MCF 10A (cell line): ENCODE measurements at regions of chr3 and their contacts with region 1.

Region 1: DNA sequence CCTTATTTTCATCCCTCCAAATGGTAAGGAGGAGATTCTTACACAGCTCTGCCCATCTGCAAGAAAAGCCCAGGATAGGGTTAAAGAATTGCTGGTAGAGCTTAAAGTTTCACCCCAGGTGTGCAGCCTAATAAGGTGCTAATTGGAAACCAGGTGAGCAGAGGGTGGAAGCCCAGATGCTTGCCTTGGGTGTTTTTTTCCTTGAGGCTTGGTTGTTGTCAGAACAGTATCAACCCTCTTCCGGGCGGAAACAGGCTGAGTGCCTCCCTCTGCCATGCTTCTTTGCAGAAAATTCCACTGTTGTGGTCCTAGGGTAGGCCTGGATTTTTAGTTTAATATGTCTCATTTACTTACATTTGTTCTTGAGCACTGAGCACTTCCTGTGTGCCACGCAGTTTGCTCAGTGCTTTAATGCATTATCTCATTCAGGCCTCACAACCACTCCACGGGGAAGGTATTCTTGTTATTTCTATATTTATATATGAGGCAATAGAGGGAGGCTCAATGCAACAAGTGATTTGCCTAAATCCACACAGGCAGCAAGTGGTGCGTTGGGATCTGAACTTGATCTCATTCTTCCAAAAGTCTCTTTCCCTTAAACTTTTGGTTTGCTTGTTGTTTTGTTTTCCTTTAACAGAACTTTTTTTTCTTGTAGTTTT is 115.0 kb upstream of the LRIG1 start:
- DNase-seq: no peak
- H3K4me3 Mint-ChIP-seq: no peak overlapping the region
- H3K27ac Mint-ChIP-seq: no peak overlapping the region
- H3K4me1 Mint-ChIP-seq: no peaks in the 10 kb centered on the region
- H3K27me3 Mint-ChIP-seq: no peaks in the 10 kb centered on the region
- CTCF ChIP-seq: no peak

Region 2: DNA sequence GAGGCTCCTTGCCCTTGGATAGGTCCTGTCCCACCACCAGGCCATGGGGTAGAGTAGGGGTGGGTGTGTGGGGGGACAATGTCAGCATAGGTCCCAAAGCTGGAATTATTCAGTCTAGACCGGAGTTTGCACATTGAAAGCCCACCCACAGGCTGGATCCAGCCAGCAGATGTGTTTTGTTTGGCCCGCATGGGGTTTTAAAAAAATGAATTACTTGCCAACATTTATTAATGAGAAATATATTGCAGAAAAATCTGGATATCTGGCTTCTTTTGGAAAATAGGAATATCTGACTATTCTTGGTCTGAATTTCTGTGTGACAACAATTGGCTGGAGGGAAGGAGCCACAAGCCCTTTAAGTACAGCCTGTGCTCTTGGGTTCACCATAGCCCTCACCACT is 97.6 kb before region 1 on chr3:
- CTCF ChIA-PET with region 1: no interaction called
- POLR2A ChIA-PET with region 1: no interaction called
- intact Hi-C with region 1: loop called (anchors 5 kb)
- DNase-seq: no peak
- H3K4me3 Mint-ChIP-seq: no peak overlapping the region
- H3K27ac Mint-ChIP-seq: no peak overlapping the region
- H3K4me1 Mint-ChIP-seq: no peaks in the 10 kb centered on the region
- H3K27me3 Mint-ChIP-seq: no peaks in the 10 kb centered on the region
- CTCF ChIP-seq: no peak

Region 3: DNA sequence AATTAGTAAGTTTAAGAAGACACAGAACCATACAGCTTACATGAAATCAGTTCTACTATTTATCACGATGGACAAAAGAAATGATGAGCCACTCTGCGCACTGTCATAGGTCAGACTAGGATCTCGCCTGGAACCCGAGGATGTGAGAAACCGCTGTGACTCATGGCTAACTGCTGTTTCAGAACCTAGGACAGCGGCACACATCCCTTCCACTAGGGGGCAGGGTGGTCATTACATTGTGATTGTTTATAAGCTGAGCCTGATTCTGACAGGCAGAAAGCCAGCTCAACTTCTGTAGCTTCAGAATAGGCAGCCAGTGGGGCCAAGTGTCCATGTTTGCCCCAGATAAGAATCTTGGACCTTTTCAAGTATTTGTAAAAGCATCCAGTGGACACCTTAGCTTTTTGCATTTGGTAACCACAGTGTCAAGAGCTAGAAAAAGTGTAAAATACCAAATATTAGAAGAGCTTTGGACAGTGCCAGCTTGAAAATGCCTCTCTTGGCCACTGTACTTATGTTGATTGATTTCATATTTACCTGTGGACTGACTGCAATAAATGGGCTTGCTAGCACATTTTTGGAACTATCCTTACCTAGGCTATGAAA is 498.1 kb after region 1 on chr3:
- CTCF ChIA-PET with region 1: no interaction called
- POLR2A ChIA-PET with region 1: no interaction called
- intact Hi-C with region 1: no loop called
- DNase-seq: peak; percentile 91
- H3K4me3 Mint-ChIP-seq: no peak overlapping the region
- H3K27ac Mint-ChIP-seq: no peak overlapping the region
- H3K4me1 Mint-ChIP-seq: no peaks in the 10 kb centered on the region
- H3K27me3 Mint-ChIP-seq: peaks cover 13% of the 10 kb centered on the region
- CTCF ChIP-seq: peak; percentile 92